ENCODE measurements at regions of chrX and their contacts with region 1.

Region 1: DNA sequence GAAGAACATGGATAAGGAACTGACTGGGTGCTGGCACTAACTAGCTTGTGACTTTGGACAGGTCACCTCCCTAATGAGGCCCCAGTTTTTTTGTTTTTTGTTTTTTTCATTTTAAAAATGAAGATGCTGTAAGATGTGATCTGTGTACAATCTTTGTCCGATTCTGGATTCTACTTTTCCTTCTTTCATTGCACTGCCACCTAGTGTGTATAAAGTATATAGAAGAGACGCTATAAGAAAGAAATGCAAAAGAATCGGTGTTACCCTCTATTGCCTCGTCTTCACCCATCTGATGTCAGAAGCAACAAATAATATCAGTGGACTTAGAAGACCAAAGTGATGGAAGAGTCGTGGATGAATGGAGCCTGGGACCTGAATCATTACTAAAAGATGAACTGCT is 58.6 kb upstream of the P2RY10 start:
- DNase-seq: peak; percentile 48
- ATAC-seq: peak; percentile 40; the same call in 1 of the 2 replicates
- H3K4me3 ChIP-seq: no peak overlapping the region
- H3K27ac ChIP-seq: no peak overlapping the region
- H3K4me1 ChIP-seq: no peaks in the 10 kb centered on the region
- H3K27me3 ChIP-seq: no peaks in the 10 kb centered on the region
- CTCF ChIP-seq: peak; percentile 61

Region 2: DNA sequence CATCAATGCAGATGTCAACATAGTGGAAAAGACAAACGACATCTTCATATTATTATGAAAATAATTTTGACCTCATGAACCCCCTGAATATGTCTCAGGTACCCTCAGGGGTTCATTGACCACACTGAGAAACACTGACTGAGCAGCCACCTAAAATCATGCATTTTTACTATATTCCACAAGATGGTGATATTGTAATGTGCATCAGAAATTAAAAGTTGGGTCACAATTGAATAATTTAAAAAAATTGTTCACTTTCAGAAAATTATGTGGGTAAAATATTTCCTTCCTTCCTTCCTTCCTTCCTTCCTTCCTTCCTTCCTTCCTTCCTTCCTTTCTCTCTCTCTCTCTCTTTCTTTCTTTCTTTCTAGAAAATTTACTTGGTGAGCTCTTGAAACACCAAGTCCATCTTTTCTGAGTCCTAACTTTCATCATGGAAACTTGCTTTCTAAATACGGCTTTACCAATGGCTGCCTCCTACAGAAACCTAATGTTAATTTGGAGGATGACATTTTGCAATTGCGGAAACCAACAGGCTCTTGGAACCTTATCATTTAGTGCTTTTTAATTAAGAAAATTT is 331.1 kb before region 1 on chrX:
- CTCF ChIA-PET with region 1: no interaction called
- POLR2A ChIA-PET with region 1: no interaction called
- intact Hi-C with region 1: loop called (anchors 1 kb)
- DNase-seq: peak; percentile 44
- ATAC-seq: peak; percentile 24; the same call in 1 of the 2 replicates
- H3K4me3 ChIP-seq: no peak overlapping the region
- H3K27ac ChIP-seq: no peak overlapping the region
- H3K4me1 ChIP-seq: no peaks in the 10 kb centered on the region
- H3K27me3 ChIP-seq: no peaks in the 10 kb centered on the region
- CTCF ChIP-seq: peak; percentile 59

Region 3: DNA sequence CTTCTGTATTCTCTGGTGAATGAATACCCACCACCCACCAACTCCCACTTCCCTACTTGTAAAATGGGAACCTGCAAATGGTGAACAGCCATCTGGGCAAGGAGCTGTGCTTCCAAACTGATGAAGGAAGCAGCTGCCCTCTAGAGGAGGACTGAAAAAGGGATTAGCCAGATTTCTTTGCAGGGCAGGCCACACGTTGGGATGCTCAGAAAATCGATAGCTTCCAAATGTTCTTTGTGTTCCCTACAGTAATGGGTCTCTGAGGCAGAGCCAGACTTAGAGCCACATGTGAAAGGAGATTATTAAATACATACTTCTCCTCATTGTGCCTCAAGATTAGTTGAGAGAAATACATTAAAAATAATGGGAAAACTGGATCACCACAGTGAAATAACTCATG is 178.3 kb before region 1 on chrX:
- CTCF ChIA-PET with region 1: no interaction called
- POLR2A ChIA-PET with region 1: no interaction called
- intact Hi-C with region 1: loop called (anchors 1 kb)
- DNase-seq: peak; percentile 63
- ATAC-seq: peak; percentile 76
- H3K4me3 ChIP-seq: no peak overlapping the region
- H3K27ac ChIP-seq: no peak overlapping the region
- H3K4me1 ChIP-seq: no peaks in the 10 kb centered on the region
- H3K27me3 ChIP-seq: no peaks in the 10 kb centered on the region
- CTCF ChIP-seq: peak; percentile 70

Region 4: DNA sequence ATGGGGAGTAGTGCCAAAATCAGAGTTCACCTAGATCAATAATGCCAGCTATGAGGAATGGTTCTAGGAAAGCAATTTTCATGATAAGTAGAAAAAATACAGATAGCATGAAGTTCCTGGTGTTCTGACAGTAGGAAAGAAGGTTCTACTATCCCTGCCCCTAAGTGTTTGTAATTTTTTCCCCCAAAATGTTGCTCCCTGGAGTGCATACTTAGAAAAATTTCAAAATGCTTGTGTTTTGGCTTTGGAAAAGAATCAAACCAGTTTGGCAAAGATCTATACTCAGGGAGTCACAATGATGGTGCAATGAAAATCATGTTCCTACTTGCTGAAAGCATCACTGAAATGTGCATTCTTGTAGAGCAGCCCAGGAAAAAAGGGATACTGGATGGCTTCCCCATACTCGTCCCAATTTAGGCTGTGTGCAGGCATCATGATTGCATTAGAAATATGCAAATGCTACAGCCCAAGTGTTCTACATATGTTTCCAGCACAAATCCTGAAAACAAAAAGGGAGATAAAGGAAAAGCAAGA is 64.3 kb before region 1 on chrX:
- CTCF ChIA-PET with region 1: no interaction called
- POLR2A ChIA-PET with region 1: no interaction called
- intact Hi-C with region 1: no loop called
- DNase-seq: no peak
- ATAC-seq: no peak
- H3K4me3 ChIP-seq: no peak overlapping the region
- H3K27ac ChIP-seq: no peak overlapping the region
- H3K4me1 ChIP-seq: no peaks in the 10 kb centered on the region
- H3K27me3 ChIP-seq: no peaks in the 10 kb centered on the region
- CTCF ChIP-seq: no peak

Region 5: DNA sequence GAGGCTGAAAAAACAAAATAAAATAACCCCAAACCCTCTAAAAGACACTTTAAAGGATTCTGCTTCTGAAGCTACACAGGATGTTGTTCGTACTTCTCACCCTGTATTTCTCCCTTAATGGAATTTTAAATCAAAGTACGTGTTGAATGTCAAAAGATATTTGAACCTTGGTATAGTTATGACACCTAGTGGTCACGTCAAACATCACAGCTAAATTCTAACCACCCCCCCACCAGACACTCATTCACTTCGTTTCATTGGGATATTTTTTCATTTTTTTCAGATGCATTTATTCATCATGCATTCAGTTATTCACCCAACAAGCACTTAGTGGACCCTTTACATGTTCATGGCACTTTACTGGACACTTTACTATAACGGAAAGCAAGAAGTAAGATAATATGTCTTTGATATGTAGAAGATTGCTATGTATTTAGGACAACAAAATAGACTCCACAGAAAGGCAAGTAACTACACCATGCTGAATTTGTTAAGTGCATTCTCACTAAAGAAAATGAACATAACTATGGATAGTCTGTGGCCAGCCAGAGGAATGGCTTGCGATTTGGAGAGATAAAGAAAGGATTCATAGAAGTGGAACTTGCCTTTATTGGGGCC is 195.5 kb after region 1 on chrX:
- CTCF ChIA-PET with region 1: no interaction called
- POLR2A ChIA-PET with region 1: no interaction called
- intact Hi-C with region 1: loop called (anchors 5 kb)
- DNase-seq: peak; percentile 64
- ATAC-seq: peak; percentile 60
- H3K4me3 ChIP-seq: no peak overlapping the region
- H3K27ac ChIP-seq: no peak overlapping the region
- H3K4me1 ChIP-seq: no peaks in the 10 kb centered on the region
- H3K27me3 ChIP-seq: no peaks in the 10 kb centered on the region; the same call in 1 of the 2 replicates
- CTCF ChIP-seq: peak; percentile 71

Region 6: DNA sequence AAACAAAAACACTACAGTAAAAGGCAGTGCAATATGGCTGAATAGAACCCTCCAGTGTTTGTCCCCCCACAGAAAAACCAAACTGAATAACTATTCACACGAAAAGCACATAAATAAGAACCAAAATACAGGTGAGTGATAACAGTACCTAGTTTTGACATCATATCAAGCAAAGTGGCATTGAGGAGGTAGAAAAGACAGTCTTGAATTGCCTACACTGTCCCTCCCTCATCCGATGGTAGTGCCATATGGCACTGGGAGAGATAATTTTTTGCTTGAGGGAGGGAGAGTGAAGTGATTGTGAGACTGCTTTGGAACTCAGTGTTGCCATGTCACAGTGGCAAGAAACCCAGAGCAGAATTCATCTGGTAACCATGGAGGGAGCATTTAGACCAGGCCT is 357.1 kb after region 1 on chrX:
- CTCF ChIA-PET with region 1: no interaction called
- POLR2A ChIA-PET with region 1: no interaction called
- intact Hi-C with region 1: no loop called
- DNase-seq: no peak
- ATAC-seq: no peak
- H3K4me3 ChIP-seq: no peak overlapping the region
- H3K27ac ChIP-seq: no peak overlapping the region
- H3K4me1 ChIP-seq: no peaks in the 10 kb centered on the region
- H3K27me3 ChIP-seq: no peaks in the 10 kb centered on the region
- CTCF ChIP-seq: no peak